Sigmoid colon (tissue), 7 donors: ENCODE measurements at regions of chr7 and their contacts with region 1.

Region 1: DNA sequence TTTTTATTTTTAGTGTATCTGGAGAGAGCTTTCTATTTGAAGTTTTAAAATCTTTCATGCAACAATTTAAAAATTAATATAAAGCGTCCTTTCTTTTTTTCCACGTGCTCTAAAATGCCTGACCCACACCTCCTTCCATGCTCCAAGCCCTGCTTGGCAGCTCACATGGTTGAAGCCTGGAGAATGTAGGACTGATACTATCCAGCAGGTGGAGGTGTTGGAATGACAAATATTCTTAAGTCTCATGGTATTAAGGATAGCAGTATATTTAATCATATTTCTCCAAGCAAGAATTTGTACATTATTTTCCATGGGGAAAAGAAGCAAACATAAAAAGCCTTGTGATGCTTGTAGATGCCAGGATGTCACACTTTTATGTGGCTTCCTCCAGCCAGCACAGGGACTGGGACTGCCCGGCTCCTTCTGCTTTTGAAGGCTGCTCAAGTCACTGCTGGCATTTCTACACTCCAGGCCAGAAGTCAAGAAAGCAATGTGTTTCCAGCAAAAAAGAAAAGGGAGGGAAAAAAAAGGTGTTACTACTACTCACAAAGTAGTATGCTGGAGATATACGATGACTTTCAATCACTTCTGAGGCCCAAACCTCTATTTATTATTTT is 49.7 kb downstream of the BZW2 start:
- DNase-seq: no peak
- H3K4me3 ChIP-seq: no peak overlapping the region
- H3K27ac ChIP-seq: no peak overlapping the region
- H3K4me1 ChIP-seq: no peaks in the 10 kb centered on the region
- H3K27me3 ChIP-seq: no peaks in the 10 kb centered on the region
- CTCF ChIP-seq: peak in 2 of 4 experiments; percentile 27 to 29
- EP300 ChIP-seq: no peak
- POLR2A ChIP-seq: no peak

Region 2: DNA sequence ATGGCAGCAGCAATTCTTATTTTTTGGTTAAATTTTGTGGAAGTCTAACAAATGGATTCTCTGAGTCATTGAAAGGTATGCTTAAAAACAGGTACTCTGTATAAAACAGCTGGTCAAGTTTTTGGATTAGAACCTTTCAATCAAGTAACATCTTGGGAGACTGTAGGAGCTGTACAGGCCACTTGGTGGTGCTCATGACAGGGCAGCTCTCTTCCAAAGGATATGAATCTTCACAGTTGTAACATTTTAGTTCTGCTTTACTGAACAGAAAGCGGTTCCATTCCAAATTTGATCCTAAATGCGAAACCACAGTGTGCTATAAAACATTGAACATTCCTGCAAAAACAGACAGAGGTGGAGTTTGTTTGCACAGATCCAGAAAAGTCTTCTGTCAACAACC is 230.6 kb after region 1 on chr7:
- intact Hi-C with region 1: loop called (anchors 10 kb)
- DNase-seq: no peak
- H3K4me3 ChIP-seq: no peak overlapping the region
- H3K27ac ChIP-seq: no peak overlapping the region
- H3K4me1 ChIP-seq: no peaks in the 10 kb centered on the region
- H3K27me3 ChIP-seq: no peaks in the 10 kb centered on the region
- CTCF ChIP-seq: peak in 3 of 4 experiments; percentile 12 to 32 (median 26)
- EP300 ChIP-seq: no peak
- POLR2A ChIP-seq: no peak